Activated CD8-positive, alpha-beta T cell treated with anti-CD3 and anti-CD28 coated beads for 36 hours (primary cell): ENCODE measurements at regions of chr10 and their contacts with region 1.

Region 1: DNA sequence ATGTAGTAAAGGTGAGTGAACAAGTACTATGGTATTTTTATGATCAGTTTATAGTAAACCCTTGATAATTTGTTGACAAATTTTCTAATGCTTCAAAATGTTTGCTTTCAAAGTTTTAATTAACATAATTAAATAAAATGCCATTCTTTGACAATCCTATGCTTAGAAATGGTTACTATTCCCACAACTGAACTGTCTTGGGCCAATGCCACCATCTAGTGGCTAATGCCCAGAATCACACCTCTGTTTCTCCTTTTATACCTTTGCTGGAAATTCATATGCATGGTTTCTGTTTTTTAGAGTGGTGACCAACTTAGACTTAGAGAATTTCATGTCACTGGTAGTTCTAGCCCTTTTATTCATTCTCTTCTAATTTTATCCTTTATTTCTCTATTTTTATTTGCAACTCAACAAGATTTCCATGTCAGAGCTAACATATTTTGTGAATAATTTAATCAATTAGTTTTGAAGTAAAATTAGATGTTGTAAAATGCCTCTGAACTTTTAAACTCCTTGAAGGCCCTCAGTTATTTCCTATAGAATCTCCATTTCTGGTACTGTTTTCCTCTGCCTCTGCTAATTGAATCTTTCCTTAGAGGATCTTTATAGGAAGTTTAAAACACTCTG is 31.1 kb downstream of the PCGF5 start:
- DNase-seq: peak; percentile 52
- ATAC-seq: peak; percentile 73
- H3K4me3 Mint-ChIP-seq: no peak overlapping the region
- H3K27ac Mint-ChIP-seq: no peak overlapping the region
- H3K4me1 Mint-ChIP-seq: peaks cover 4% of the 10 kb centered on the region
- H3K27me3 Mint-ChIP-seq: no peaks in the 10 kb centered on the region
- CTCF ChIP-seq: peak; percentile 93

Region 2: DNA sequence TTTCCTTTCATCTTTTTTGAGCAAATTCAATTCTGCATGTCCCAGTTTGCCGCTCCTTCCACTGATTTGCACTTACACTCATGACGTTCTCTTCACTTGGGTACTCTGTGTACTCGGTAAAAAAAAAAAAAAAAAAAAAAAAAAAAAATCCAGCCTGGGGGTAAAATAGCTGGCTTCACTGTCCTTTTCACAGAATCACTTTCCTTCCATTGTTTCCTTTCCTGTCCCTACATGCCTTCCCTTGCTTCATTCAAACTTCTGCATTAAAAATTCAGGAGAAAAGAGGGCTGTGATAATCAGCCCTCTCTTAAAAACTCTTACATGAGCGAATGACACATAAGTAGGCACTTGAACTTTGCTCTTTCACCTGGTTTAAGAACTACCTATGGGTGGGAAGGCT is 339.4 kb before region 1 on chr10:
- CTCF ChIA-PET with region 1: interaction called, 60 read pairs
- POLR2A ChIA-PET with region 1: no interaction called
- intact Hi-C with region 1: loop called (anchors 5 kb)
- DNase-seq: no peak
- ATAC-seq: no peak
- H3K4me3 Mint-ChIP-seq: no peak overlapping the region
- H3K27ac Mint-ChIP-seq: no peak overlapping the region
- H3K4me1 Mint-ChIP-seq: peaks cover 2% of the 10 kb centered on the region
- H3K27me3 Mint-ChIP-seq: no peaks in the 10 kb centered on the region
- CTCF ChIP-seq: no peak

Region 3: GRCh38 chr10:91088300-91089140 is 163.0 kb before region 1 on chr10:
- CTCF ChIA-PET with region 1: interaction called, 79 read pairs
- POLR2A ChIA-PET with region 1: no interaction called
- intact Hi-C with region 1: loop called (anchors 2 kb)
- DNase-seq: no peak
- ATAC-seq: no peak
- H3K4me3 Mint-ChIP-seq: no peak overlapping the region
- H3K27ac Mint-ChIP-seq: no peak overlapping the region
- H3K4me1 Mint-ChIP-seq: no peaks in the 10 kb centered on the region
- H3K27me3 Mint-ChIP-seq: no peaks in the 10 kb centered on the region
- CTCF ChIP-seq: peak; percentile 38

Region 4: DNA sequence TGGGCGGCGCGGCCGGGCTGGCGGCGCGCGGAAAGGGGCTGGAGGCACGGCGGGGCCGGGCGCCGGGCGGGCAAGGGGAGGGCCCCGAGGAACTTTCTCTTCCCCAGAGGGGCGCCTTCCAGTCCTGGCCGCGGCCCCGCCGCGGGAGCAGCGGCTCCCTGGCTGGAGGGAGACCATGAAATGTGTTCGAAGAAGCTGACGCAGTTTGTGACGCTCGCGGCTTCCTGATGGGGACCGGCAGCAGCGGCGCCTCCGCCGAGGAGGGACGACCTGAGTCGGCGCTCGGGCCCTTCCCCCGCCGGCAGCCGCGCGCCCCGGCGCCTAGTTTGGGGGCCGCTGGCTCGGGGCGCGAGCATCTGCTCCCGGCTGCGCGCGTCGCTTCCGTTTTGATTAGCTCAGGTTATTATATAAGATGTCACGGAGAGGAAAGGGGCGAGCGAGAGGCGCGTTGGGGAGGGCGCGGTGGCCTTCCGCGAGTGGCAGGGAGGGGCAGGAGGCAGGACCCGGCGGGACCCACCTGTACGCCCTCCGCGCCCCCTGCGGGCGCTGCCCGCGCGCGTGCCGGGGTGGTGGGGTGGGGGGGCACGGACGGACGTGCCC is 88.2 kb before region 1 on chr10:
- CTCF ChIA-PET with region 1: interaction called, 26 read pairs
- POLR2A ChIA-PET with region 1: interaction called, 9 read pairs
- intact Hi-C with region 1: loop called (anchors 5 kb)
- DNase-seq: peak; percentile 84
- ATAC-seq: peak; percentile 67
- H3K4me3 Mint-ChIP-seq: peak overlapping the region; percentile 82
- H3K27ac Mint-ChIP-seq: peak overlapping the region; percentile 93
- H3K4me1 Mint-ChIP-seq: peaks cover 46% of the 10 kb centered on the region
- H3K27me3 Mint-ChIP-seq: no peaks in the 10 kb centered on the region
- CTCF ChIP-seq: no peak

Region 5: GRCh38 chr10:91220194-91220953 is 31.2 kb before region 1 on chr10 and contains the start of gene PCGF5:
- CTCF ChIA-PET with region 1: interaction called, 12 read pairs
- POLR2A ChIA-PET with region 1: no interaction called
- intact Hi-C with region 1: no loop called
- DNase-seq: peak; percentile 90
- ATAC-seq: peak; percentile 99
- H3K4me3 Mint-ChIP-seq: peak within 1 kb of the TSS; percentile 81
- H3K27ac Mint-ChIP-seq: peak within 1 kb of the TSS; percentile 69
- H3K4me1 Mint-ChIP-seq: peaks cover 36% of the 10 kb centered on the region
- H3K27me3 Mint-ChIP-seq: no peaks in the 10 kb centered on the region
- CTCF ChIP-seq: peak; percentile 17
- total RNA-seq, gene PCGF5: 34.8 to 36.9 TPM

Region 6: DNA sequence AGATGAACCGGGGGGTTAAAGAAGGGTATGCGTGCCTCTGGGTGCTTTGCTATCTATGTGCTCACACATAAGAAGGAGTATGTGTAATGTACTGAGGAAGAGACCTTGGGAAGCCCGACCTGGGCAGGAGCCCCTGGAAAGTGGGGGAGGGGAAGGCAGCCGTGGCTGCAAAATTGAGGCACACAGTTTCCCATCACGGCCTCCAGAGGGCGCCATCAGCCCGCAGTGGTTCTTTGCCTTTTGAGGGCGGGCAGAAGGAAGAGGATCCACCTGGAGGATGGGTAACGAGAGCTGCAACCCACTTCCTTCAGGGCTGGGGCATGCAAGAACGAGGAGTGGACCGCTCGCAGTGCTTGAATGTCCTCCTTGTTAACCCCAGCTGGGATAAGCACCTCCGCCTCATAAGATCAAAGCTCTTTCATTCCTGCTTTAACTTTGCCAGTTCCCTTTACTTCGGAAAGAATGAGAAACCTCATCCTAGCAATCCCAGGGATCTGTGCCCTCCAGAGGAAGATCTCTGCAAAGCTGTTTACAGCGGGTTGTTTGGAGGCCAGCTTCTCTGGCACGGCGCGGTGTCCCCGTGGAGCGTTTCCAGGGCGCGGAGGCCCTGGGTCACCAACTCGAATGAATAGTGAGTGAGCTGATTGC is 46.8 kb after region 1 on chr10:
- CTCF ChIA-PET with region 1: interaction called, 13 read pairs
- POLR2A ChIA-PET with region 1: no interaction called
- intact Hi-C with region 1: no loop called
- DNase-seq: peak; percentile 86
- ATAC-seq: peak; percentile 95
- H3K4me3 Mint-ChIP-seq: peak overlapping the region; percentile 59
- H3K27ac Mint-ChIP-seq: no peak overlapping the region
- H3K4me1 Mint-ChIP-seq: peaks cover 9% of the 10 kb centered on the region
- H3K27me3 Mint-ChIP-seq: peaks cover 9% of the 10 kb centered on the region
- CTCF ChIP-seq: peak; percentile 92

Region 7: DNA sequence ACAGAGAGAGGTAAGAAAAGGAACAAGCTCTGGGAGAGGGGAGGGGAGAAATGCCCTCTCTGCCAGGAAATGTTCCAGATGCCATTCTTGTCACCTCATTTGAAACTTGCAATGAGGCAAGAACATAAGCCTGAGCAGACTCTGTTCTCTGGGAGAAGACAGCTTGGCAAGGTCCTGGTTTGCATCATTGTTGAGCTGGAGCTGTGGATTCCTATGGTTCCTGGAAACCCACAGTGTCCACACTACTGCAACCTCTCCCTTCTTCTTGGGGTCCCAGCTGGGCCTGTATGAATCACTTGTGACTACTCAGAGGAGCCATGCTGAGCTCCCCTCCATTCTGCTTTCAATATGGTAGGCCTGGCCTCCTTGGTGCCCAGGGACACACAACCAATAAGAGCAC is 97.8 kb after region 1 on chr10:
- CTCF ChIA-PET with region 1: no interaction called
- POLR2A ChIA-PET with region 1: no interaction called
- intact Hi-C with region 1: no loop called
- DNase-seq: no peak
- ATAC-seq: no peak
- H3K4me3 Mint-ChIP-seq: no peak overlapping the region
- H3K27ac Mint-ChIP-seq: no peak overlapping the region
- H3K4me1 Mint-ChIP-seq: peaks cover 3% of the 10 kb centered on the region
- H3K27me3 Mint-ChIP-seq: no peaks in the 10 kb centered on the region
- CTCF ChIP-seq: no peak

Region 8: DNA sequence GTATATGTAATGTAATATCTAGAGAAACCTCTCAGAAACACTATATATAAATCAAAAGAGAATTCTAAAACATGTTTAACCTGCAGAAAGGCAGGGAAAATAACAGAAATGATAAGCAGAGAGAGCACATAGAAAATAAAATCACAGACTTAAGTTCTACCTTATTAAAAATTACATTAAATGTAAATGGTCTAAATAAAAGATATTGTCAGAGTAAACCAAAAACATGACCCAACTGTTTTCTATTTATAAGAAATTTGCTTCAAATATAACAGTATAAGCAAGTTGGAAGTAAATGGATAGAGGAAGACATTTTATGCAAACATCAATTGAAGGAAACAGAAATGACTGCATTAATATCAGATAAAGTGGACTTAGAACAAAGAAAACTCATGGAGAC is 202.0 kb after region 1 on chr10:
- CTCF ChIA-PET with region 1: no interaction called
- POLR2A ChIA-PET with region 1: no interaction called
- intact Hi-C with region 1: no loop called
- DNase-seq: no peak
- ATAC-seq: no peak
- H3K4me3 Mint-ChIP-seq: no peak overlapping the region
- H3K27ac Mint-ChIP-seq: no peak overlapping the region
- H3K4me1 Mint-ChIP-seq: no peaks in the 10 kb centered on the region
- H3K27me3 Mint-ChIP-seq: no peaks in the 10 kb centered on the region
- CTCF ChIP-seq: no peak